PC-3 (cell line): ENCODE measurements at regions of chr1 and their contacts with region 1.

Region 1: GRCh38 chr1:177959811-177960515 is 9.9 kb downstream of the SEC16B start:
- DNase-seq: peak; percentile 55
- ATAC-seq: peak; percentile 86
- H3K4me3 ChIP-seq: no peak overlapping the region
- H3K27ac ChIP-seq: no peak overlapping the region
- H3K4me1 ChIP-seq: no peaks in the 10 kb centered on the region
- H3K27me3 ChIP-seq: no peaks in the 10 kb centered on the region
- CTCF ChIP-seq: peak; percentile 64

Region 2: DNA sequence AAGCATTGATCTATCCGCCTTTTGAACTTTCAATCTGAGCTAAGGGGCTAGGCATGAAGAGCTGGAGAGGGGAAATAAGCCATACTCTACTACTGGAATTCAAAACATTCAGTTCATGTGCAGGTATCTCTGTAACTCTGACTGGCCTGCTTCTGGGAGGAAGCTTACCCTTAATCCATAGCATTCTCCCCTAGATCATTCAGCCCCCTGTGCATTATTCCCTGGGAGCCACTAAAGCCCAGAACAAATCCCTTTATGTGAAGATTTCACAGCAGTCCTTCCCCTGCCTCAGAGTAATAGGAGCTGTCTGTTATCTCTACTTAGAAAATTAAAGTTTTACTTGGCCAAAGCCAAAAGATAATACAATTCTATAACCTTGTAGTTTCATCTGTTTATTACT is 290.8 kb before region 1 on chr1:
- CTCF ChIA-PET with region 1: no interaction called
- POLR2A ChIA-PET with region 1: no interaction called
- intact Hi-C with region 1: no loop called
- DNase-seq: no peak
- ATAC-seq: no peak
- H3K4me3 ChIP-seq: no peak overlapping the region
- H3K27ac ChIP-seq: no peak overlapping the region
- H3K4me1 ChIP-seq: no peaks in the 10 kb centered on the region
- H3K27me3 ChIP-seq: 0 out of 2 replicates have a peak, but pooled peaks cover 5% of the 10 kb centered on the region
- CTCF ChIP-seq: no peak

Region 3: DNA sequence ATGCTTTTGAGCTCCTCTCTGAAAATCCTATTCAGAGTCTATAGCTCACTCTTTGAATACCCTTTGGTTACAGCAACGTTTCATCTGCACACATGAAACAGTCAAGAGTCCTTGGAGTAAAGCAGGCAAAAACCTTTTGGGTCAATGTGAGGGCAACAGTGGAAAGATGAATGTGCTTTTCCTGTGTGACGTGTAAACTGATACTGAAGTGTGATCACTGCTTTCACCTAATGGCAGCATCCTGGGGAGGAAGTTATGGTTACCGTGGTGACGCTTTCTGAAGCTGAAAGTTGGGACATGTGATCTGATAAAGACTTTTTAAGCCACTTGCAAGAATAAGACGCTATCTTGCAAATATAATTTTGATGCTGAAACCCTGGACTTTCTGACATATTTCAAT is 150.1 kb before region 1 on chr1:
- CTCF ChIA-PET with region 1: no interaction called
- POLR2A ChIA-PET with region 1: no interaction called
- intact Hi-C with region 1: no loop called
- DNase-seq: no peak
- ATAC-seq: no peak
- H3K4me3 ChIP-seq: no peak overlapping the region
- H3K27ac ChIP-seq: no peak overlapping the region
- H3K4me1 ChIP-seq: no peaks in the 10 kb centered on the region
- H3K27me3 ChIP-seq: no peaks in the 10 kb centered on the region
- CTCF ChIP-seq: no peak

Region 4: GRCh38 chr1:178037503-178038253 is 77.7 kb after region 1 on chr1:
- CTCF ChIA-PET with region 1: no interaction called
- POLR2A ChIA-PET with region 1: no interaction called
- intact Hi-C with region 1: loop called (anchors 5 kb)
- DNase-seq: peak; percentile 72
- ATAC-seq: peak; percentile 96
- H3K4me3 ChIP-seq: peak overlapping the region; percentile 69
- H3K27ac ChIP-seq: peak overlapping the region; percentile 26; the same call in 1 of the 2 replicates
- H3K4me1 ChIP-seq: peaks cover 12% of the 10 kb centered on the region
- H3K27me3 ChIP-seq: no peaks in the 10 kb centered on the region
- CTCF ChIP-seq: peak; percentile 37; the same call in 1 of the 2 replicates